ENCODE measurements at regions of chr4 and their contacts with region 1.

Region 1: DNA sequence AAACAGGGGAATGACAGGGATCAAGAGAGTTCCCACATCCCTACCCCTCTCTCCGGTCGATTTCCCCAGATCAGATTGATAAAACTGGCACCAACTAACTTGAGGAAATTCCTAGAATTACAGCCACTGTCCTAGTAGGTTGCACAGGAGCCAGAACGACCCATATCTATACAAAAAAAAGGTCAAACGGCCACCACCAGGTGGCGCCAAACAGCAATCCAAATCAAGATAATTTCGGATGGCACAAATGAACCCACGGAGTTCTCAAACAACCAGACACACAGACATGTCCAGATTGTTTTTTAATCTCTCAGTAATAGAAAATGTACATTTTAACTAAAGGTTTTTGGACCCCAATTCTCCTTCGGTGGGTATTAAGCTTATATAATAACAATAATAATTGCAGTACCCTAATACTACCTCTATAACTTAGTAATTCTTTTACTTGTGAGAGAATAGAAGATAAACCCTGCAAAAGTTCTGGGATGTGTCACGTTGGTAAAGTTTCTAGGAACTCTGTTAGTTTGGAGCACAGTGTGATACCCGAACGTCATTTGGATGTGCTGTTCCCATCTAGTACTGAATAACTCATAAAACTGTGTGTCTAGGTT is 212.6 kb downstream of the SPOCK3 start:
- DNase-seq: peak; percentile 29 to 88 (median 57)
- ATAC-seq: peak; percentile 61 to 86 (median 81)
- H3K4me3 ChIP-seq: no peak overlapping the region
- H3K27ac ChIP-seq: no peak overlapping the region
- H3K4me1 ChIP-seq: no peaks in the 10 kb centered on the region
- H3K27me3 ChIP-seq: no peaks in the 10 kb centered on the region
- CTCF ChIP-seq: peak; percentile 64 to 83 (median 82)

Region 2: DNA sequence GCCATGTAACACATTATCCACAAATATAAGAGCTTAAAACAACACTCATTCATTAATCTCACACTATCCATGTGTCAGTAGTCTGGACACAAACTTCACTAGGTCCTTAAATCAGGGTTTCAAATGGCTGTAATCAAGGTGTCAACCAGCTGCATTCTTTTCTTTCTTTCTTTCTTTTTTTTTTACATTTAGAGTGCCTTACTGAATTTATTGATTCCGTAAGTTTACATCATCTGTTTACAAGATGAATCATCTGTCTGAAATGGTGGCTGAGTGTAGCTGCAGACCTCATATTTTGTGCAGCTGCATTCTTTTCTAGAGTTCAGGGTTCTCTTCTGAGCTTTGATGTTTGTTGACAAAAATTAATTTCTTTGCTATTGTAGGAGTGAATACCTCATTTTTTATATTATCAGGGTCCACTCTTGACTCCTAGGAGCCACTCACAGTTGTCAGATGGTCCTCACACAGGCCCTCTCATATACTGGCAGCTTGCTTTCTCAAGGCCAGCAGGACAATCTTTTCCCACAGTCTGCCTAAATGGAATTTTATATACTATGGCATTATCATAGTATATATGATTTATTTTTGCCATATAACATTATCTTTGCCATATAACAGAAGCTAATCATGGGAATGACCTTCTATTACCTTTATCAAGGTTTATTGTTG is 174.8 kb after region 1 on chr4:
- intact Hi-C with region 1: no loop called
- DNase-seq: no peak
- ATAC-seq: peak in 2 of 4 donors; percentile 56 to 76
- H3K4me3 ChIP-seq: no peak overlapping the region
- H3K27ac ChIP-seq: peak overlapping the region in 1 of 4 donors; percentile 17
- H3K4me1 ChIP-seq: no peaks in the 10 kb centered on the region
- H3K27me3 ChIP-seq: no peaks in the 10 kb centered on the region
- CTCF ChIP-seq: no peak

Region 3: GRCh38 chr4:168076989-168077725 is 1055.5 kb after region 1 on chr4:
- intact Hi-C with region 1: loop called in 2 of 3 experiments (anchors 10 kb)
- DNase-seq: peak in 5 of 6 donors; percentile 9 to 72 (median 48)
- ATAC-seq: peak; percentile 77 to 92 (median 90)
- H3K4me3 ChIP-seq: no peak overlapping the region
- H3K27ac ChIP-seq: no peak overlapping the region
- H3K4me1 ChIP-seq: no peaks in the 10 kb centered on the region
- H3K27me3 ChIP-seq: no peaks in the 10 kb centered on the region
- CTCF ChIP-seq: peak; percentile 52 to 80 (median 73)

Measured in pancreas (tissue), 10 donors.